HAP-1 (cell line): ENCODE measurements at regions of chr11 and their contacts with region 1.

Region 1: DNA sequence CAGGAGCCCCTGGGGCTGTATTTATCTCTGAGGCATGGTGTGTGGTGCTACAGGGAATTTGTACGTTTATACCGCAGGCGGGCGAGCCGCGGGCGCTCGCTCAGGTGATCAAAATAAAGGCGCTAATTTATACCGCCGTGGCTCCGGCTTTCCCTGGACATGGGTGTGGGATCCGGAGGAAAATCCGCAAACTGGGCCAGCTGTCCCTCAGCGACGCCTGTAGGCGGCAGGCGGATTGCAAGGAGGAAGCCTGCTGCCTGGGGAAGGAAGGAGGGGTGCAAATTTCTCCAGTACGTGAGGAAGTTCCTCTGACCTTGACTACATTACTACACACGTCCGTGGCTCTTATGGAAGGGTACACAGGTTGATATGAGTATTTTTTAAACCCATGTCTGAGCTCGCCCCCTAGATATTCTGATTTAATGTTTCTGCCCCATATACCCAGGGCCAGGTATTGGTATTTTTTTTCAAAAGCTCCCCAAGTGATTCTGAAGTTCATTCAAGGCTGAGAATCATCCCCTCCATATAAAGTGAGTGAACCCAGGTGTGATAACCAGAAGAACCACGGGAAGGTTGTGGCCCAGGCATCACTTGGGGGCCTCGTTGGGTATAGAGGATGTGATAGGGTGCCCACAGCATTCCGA is 2.8 kb downstream of the MYOD1 start:
- DNase-seq: no peak
- H3K4me3 ChIP-seq: no peak overlapping the region
- H3K4me1 ChIP-seq: no peaks in the 10 kb centered on the region
- H3K27me3 ChIP-seq: peaks cover 34% of the 10 kb centered on the region

Region 2: GRCh38 chr11:17598700-17599459 is 123.2 kb before region 1 on chr11:
- in situ Hi-C with region 1: loop called (anchors 10 kb)
- DNase-seq: peak; percentile 49 to 88
- H3K4me3 ChIP-seq: no peak overlapping the region
- H3K4me1 ChIP-seq: no peaks in the 10 kb centered on the region
- H3K27me3 ChIP-seq: no peaks in the 10 kb centered on the region